ENCODE measurements at regions of chr13 and their contacts with region 1.

Region 1: GRCh38 chr13:44274452-44275205 is 99.0 kb upstream of the SERP2 start:
- DNase-seq: no peak

Region 2: GRCh38 chr13:44237276-44237767 is 37.3 kb before region 1 on chr13:
- in situ Hi-C with region 1: loop called (anchors 5 kb)
- DNase-seq: peak; percentile 64

Measured in G401 (cell line).